HEK293T (cell line): ENCODE measurements at regions of chr10 and their contacts with region 1.

Region 1: GRCh38 chr10:67779465-67780203 is 58.4 kb downstream of the DNAJC12 start:
- DNase-seq: peak; percentile 69

Region 2: GRCh38 chr10:67151471-67151870 is 628.2 kb before region 1 on chr10:
- CTCF ChIA-PET with region 1: interaction called, 11 read pairs
- POLR2A ChIA-PET with region 1: no interaction called
- DNase-seq: no peak

Region 3: GRCh38 chr10:67697724-67698131 is 81.9 kb before region 1 on chr10:
- CTCF ChIA-PET with region 1: interaction called, 20 read pairs
- POLR2A ChIA-PET with region 1: interaction called, 4 read pairs
- DNase-seq: peak; percentile 35

Region 4: GRCh38 chr10:67760272-67760671 is 19.4 kb before region 1 on chr10:
- CTCF ChIA-PET with region 1: no interaction called
- POLR2A ChIA-PET with region 1: no interaction called
- DNase-seq: no peak

Region 5: DNA sequence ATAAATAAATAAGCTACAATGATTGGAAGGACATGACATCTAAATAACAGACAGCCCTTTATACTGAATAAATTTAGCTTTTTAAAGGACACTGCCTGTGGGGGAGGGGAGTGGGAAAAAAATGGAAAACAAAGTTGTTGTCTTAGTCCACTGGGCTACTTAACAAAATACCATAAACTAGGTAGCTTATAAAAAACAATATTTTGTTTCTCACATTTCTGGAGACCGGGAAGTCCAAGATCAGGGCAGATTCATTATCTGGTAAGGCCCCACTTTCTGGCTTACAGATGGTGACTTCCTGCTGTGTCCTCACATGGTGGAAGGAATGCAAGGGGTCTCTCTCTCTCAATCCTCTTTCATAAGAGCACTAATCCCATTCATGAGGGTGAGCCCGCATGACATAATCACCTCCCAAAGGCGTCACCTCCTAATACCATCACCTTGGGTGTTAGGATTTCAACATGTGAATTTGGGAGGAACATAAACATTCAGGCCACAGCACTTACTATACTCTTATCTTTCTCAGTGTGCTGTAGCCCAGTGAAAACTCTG is 15.4 kb after region 1 on chr10:
- CTCF ChIA-PET with region 1: no interaction called
- POLR2A ChIA-PET with region 1: no interaction called
- DNase-seq: no peak